ENCODE measurements at regions of chr11 and their contacts with region 1.

Region 1: DNA sequence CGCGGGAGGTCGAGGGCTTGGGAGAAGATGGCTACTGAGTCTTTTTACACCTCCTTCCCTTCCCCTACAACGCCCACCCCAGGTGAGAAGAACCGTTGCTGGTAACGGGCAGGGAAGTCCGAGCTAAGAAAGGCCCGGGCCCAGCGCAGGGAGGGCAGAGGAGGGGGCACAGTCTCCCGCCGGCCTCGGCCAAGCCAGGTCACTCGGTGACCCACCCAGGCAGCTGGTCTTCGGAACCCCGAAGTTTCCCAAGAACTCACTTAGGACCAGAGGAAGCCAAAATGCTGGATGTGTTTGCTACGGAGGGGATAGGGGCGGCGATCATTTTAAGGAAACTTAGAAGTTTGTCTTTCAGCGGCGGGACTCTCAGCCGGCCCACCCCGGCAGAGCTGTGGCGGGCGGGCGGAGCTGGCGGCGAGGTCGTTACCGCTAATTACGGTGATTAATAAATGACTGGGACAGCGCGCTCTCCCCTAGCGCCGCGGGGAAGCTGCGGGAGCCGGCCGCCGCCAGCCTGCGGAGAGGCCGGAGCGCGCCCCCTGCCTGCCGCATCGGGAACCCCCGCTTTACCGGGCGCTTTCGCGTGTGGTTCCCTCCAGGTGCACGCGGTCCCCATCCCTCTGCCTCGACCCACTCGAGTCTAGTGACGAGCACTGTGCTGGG is 820 bp downstream of the ROBO3 start:
- DNase-seq: peak; percentile 52
- ATAC-seq: peak; percentile 66
- H3K4me3 Mint-ChIP-seq: no peak overlapping the region
- H3K27ac Mint-ChIP-seq: no peak overlapping the region
- H3K4me1 Mint-ChIP-seq: peaks cover 17% of the 10 kb centered on the region
- H3K27me3 Mint-ChIP-seq: peaks cover 89% of the 10 kb centered on the region

Region 2: GRCh38 chr11:124778281-124778680 is 87.8 kb before region 1 on chr11:
- CTCF ChIA-PET with region 1: no interaction called
- DNase-seq: no peak
- ATAC-seq: no peak
- H3K4me3 Mint-ChIP-seq: no peak overlapping the region
- H3K27ac Mint-ChIP-seq: no peak overlapping the region
- H3K4me1 Mint-ChIP-seq: peaks cover 10% of the 10 kb centered on the region
- H3K27me3 Mint-ChIP-seq: no peaks in the 10 kb centered on the region

Region 3: GRCh38 chr11:124846071-124846719 is 19.9 kb before region 1 on chr11:
- CTCF ChIA-PET with region 1: interaction called, 18 read pairs
- DNase-seq: no peak
- ATAC-seq: no peak
- H3K4me3 Mint-ChIP-seq: no peak overlapping the region
- H3K27ac Mint-ChIP-seq: no peak overlapping the region
- H3K4me1 Mint-ChIP-seq: peaks cover 4% of the 10 kb centered on the region
- H3K27me3 Mint-ChIP-seq: peaks cover 98% of the 10 kb centered on the region

Region 4: DNA sequence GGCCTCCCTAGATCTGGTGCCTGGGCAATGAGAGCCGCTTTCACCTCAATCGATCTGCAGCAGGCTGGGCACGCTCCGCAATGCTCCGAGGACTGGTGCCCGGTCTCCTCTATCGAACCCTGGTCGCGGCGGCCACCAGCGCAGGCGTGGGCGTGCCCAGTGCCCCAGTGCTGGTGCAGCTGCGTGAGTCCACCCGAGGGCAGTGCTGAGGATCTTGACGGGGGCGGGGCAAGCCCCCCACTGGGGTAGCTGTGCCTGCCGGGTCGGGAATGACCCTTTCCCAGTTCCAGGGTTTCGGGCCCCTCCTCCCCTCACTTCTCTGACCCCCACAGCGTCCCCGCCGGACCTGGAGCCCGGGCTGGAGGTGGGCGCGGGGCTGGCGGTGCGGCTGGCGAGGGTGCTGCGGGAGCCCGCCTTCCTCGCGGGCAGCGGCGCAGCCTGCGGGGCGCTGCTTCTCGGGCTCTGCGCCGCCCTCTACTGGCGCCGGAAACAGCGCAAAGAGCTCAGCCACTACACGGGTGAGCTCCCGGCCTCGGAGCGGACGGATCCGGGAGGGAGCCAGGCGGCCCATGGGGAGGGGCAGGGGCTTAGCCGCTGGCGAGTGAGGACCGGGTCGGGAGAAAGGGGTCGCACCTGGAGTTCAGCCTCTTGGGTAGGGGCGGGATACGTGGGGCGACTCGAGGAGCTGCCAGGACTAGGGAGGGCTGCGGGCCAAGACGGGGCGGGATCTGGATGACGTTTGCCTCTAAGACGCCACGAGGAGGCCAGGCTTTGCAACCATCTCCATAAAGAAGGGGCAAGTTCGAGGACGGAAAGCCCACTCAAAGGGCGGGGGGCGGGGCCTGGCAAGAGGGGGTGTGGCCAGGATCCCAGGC is 10.1 kb after region 1 on chr11:
- CTCF ChIA-PET with region 1: interaction called, 14 read pairs
- DNase-seq: peak; percentile 87
- ATAC-seq: peak; percentile 96
- H3K4me3 Mint-ChIP-seq: peak overlapping the region; percentile 77
- H3K27ac Mint-ChIP-seq: peak overlapping the region; percentile 85
- H3K4me1 Mint-ChIP-seq: peaks cover 15% of the 10 kb centered on the region
- H3K27me3 Mint-ChIP-seq: peaks cover 31% of the 10 kb centered on the region

Region 5: DNA sequence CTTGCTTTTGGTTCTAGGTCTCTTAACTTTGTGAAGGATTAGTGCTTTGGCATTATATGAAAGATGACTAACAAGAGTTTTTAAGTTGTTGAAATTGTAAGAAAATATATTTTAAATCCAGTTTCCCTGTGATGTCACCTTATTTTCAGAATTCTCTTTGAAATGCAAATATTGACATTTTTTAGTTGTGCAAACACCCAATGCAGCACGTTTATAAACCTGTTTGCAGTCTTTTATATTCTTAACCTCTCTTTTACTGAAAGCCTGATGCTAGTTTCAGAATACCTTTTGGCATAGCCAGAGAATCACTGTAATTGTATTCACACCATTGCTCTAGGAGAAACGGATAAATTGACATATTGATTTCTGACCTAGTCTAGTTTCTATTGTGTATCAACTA is 154.3 kb after region 1 on chr11:
- CTCF ChIA-PET with region 1: no interaction called
- DNase-seq: no peak
- ATAC-seq: no peak
- H3K4me3 Mint-ChIP-seq: no peak overlapping the region
- H3K27ac Mint-ChIP-seq: no peak overlapping the region
- H3K4me1 Mint-ChIP-seq: no peaks in the 10 kb centered on the region
- H3K27me3 Mint-ChIP-seq: no peaks in the 10 kb centered on the region